OCI-LY7 (cell line): ENCODE measurements at regions of chr5 and their contacts with region 1.

Region 1: GRCh38 chr5:65512170-65512937 is 30.6 kb upstream of the ADAMTS6 start:
- DNase-seq: no peak
- H3K4me3 ChIP-seq: no peak overlapping the region
- H3K27ac ChIP-seq: no peak overlapping the region
- H3K4me1 ChIP-seq: no peaks in the 10 kb centered on the region
- CTCF ChIP-seq: no peak

Region 2: DNA sequence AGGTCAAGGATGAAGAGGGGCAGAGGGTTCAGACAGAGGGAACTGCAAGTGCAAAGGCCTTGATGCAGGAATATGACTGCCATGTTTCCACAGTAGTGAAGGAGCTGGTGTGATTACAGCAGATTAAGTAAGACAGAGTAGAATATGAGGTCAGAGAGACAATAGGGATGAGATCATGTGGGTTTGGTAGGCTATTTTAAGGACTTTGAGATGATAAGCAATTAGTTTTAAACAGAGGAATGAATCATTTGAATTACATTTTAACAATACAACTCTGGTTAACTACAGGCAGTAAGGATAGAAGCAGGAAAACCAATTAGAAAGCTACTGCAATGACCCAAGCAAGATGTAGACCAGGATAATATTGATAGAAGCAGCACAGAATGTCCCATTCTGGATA is 42.9 kb after region 1 on chr5:
- CTCF ChIA-PET with region 1: no interaction called
- POLR2A ChIA-PET with region 1: interaction called, 10 read pairs
- intact Hi-C with region 1: no loop called
- DNase-seq: no peak
- H3K4me3 ChIP-seq: no peak overlapping the region
- H3K27ac ChIP-seq: no peak overlapping the region
- H3K4me1 ChIP-seq: no peaks in the 10 kb centered on the region
- CTCF ChIP-seq: no peak